ENCODE measurements at regions of chr6 and their contacts with region 1.

Region 1: DNA sequence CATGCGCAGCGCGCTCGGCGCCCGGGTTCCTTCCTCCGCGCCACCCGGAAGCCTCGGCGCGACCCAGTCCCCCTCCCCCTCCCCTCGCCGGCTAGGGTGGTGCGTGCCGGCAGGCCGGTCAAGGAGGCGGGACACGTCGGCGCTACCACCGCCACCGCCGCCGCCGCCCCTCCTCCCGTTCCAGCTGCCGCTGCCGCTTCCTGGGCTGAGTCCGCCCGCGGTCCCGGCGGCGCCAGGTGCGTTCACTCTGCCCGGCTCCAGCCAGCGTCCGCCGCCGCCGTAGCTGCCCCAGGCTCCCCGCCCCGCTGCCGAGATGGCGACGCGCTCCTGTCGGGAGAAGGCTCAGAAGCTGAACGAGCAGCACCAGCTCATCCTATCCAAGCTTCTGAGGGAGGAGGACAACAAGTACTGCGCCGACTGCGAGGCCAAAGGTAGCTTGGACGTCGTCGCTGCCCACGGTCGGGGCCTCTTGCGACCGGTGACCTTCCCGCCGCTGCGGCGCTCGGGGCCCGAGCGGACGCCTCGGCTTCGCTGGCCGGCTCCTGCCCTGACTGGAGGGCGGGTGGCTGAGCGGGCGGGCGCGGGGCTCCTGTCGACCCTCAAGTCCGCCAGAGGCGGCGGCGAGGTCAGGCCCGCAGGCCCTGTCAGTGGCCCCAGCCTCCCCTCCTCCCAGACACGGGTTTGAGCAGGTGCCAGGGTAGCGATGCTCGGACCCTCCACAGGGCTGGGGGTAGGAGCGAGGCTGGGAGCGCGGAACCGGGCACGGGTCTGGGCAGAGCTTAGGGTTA is at the start of gene SMAP1:
- DNase-seq: peak; percentile 97 to 99 (median 97)
- ATAC-seq: peak; percentile 95 to 99 (median 98)
- H3K4me3 ChIP-seq: peak within 1 kb of the TSS; percentile 68 to 98 (median 92)
- H3K27ac ChIP-seq: peak within 1 kb of the TSS; percentile 84 to 99 (median 95)
- H3K4me1 ChIP-seq: peaks cover 0 to 61% (median 36%) of the 10 kb centered on the region in 12 donors
- H3K27me3 ChIP-seq: no peaks in the 10 kb centered on the region
- CTCF ChIP-seq: peak in 1 of 12 donors; percentile 12
- POLR2A ChIP-seq: peak in 1 of 2 donors; percentile 76
- total RNA-seq, gene SMAP1: 28.1 to 35.1 (median 29.9) TPM

Region 2: DNA sequence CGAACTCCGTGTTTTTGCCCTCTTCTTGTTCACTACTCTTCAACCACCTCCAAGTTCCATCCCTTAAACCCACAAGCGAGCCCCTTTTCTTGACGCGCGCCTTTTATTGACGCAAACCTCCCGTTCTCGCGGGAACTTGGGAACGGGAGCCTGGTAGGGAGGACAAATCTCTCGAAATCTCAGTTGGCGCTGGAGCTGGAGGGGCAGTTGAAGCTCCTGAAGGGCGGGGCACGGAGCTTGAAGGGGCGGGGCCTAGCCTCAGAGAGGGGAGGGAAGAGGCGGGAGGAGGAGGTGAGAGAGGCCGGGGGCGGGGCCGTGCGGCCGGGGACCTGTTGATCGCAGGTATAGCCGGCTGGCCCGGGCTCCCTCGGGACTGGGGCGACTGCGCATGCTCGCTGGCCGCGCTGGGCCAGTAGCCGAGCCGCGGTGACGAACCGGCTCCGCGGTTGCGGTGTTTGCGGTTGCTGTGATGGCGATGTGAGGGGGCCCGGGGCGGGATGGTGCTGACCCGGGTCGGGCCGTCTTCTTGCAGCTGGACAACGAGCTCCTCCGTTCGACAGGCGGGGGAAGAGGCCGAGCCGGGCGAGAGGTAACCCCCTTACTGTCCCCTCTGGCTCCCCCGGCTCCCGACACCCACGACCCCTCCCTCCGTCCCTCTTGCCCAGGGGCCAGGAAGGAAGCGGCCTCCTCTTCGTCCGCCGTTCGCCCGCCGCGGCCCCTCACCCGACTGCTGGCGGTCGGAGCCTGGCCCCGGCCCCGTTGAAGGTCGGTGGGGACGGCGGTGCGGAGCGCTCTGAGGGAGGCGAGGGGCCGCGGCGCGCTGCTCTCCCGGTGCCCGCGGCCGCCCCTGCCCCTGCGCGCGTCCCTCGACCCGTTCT is 254.6 kb before region 1 on chr6 and contains the start of gene FAM135A:
- intact Hi-C with region 1: loop called in 4 of 10 experiments (anchors 5 to 10 kb)
- DNase-seq: peak; percentile 95 to 98 (median 97)
- ATAC-seq: peak; percentile 99
- H3K4me3 ChIP-seq: peak within 1 kb of the TSS; percentile 47 to 99 (median 94)
- H3K27ac ChIP-seq: peak within 1 kb of the TSS; percentile 62 to 92 (median 80)
- H3K4me1 ChIP-seq: peaks cover 0 to 21% (median 15%) of the 10 kb centered on the region in 12 donors
- H3K27me3 ChIP-seq: no peaks in the 10 kb centered on the region
- CTCF ChIP-seq: no peak
- POLR2A ChIP-seq: peak in 1 of 2 donors; percentile 62
- total RNA-seq, gene FAM135A: 9.7 to 14.9 (median 13.2) TPM

Region 3: GRCh38 chr6:70507161-70507560 is 160.7 kb before region 1 on chr6:
- intact Hi-C with region 1: no loop called
- DNase-seq: no peak
- ATAC-seq: no peak
- H3K4me3 ChIP-seq: no peak overlapping the region
- H3K27ac ChIP-seq: no peak overlapping the region
- H3K4me1 ChIP-seq: no peaks in the 10 kb centered on the region
- H3K27me3 ChIP-seq: no peaks in the 10 kb centered on the region
- CTCF ChIP-seq: no peak
- POLR2A ChIP-seq: no peak

Region 4: DNA sequence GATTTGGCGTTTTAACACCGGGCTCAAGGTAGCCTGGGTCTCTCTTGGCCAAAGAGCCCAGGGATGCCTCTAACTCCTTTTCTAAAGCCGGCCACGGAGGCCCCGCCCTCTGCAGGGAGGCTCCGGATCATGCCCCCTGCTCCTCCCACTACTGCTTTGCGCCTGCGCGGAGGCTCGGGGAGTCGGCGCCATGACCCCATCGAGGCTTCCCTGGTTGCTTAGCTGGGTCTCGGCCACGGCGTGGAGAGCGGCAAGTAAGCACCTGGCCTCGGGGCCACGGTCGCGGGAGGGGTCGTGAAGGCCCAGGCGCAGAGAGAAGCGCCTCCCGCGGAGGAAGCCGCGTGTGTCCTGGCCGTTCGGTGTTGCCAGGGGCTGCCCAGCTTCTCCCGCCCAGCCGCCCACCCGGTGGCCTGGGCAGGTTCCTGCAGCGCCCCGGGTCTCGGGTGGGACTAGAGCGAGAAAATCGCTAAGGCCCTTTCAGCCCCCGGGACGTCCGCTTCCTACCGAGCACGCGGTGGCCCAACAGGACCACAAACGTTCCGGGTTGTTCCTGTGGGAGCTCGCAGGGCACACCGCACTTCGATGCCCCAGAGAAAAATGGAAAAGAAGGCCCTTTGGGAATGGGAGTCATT is 101.0 kb before region 1 on chr6 and contains the start of gene SDHAF4:
- intact Hi-C with region 1: loop called in 7 of 10 experiments (anchors 2 to 10 kb)
- DNase-seq: peak; percentile 92 to 97 (median 96)
- ATAC-seq: peak; percentile 100
- H3K4me3 ChIP-seq: peak within 1 kb of the TSS; percentile 74 to 98 (median 79)
- H3K27ac ChIP-seq: peak within 1 kb of the TSS; percentile 53 to 96 (median 86)
- H3K4me1 ChIP-seq: peaks cover 0 to 15% (median 5%) of the 10 kb centered on the region in 12 donors
- H3K27me3 ChIP-seq: no peaks in the 10 kb centered on the region
- CTCF ChIP-seq: peak in 2 of 12 donors; percentile 24 to 26
- POLR2A ChIP-seq: peak in 1 of 2 donors; percentile 84
- total RNA-seq, gene SDHAF4: 8.8 to 21.3 (median 14.3) TPM

Region 5: DNA sequence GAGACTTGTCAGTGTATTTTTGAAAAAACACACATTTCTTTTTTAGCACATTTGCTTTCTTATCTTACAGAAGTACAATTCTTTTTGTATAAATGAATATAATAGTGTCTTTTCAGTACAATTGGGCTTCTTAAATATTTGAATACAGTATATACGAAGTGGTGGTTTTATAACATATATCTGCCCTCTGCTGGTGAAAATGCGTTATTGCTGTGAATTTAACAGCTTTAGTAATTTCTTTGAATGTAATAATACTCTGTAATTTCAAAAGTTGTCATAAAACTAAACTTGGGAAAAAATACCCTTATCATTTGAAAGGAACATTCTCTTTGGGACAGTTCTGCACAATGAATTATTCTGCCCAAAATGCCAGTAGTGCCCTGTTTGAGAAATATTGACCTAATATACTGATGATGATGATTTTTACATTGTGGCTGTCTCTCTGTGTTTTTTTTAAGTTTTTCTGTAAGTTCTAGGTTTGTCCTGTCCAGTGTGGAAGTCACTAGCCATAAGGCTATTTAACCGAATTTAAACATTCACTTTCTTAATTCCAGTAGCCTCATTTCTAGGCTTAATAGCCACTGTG is 18.7 kb after region 1 on chr6:
- intact Hi-C with region 1: loop called in 1 of 10 experiments (anchors 2 kb)
- DNase-seq: no peak
- ATAC-seq: peak in 1 of 4 donors; percentile 67
- H3K4me3 ChIP-seq: no peak overlapping the region
- H3K27ac ChIP-seq: no peak overlapping the region
- H3K4me1 ChIP-seq: peaks cover 0 to 36% (median 22%) of the 10 kb centered on the region in 12 donors
- H3K27me3 ChIP-seq: no peaks in the 10 kb centered on the region
- CTCF ChIP-seq: peak; percentile 66 to 87 (median 83)
- POLR2A ChIP-seq: no peak

Region 6: GRCh38 chr6:70905742-70906141 is 237.8 kb after region 1 on chr6:
- intact Hi-C with region 1: no loop called
- DNase-seq: no peak
- ATAC-seq: no peak
- H3K4me3 ChIP-seq: no peak overlapping the region
- H3K27ac ChIP-seq: no peak overlapping the region
- H3K4me1 ChIP-seq: no peaks in the 10 kb centered on the region
- H3K27me3 ChIP-seq: no peaks in the 10 kb centered on the region
- CTCF ChIP-seq: no peak
- POLR2A ChIP-seq: no peak

Measured in heart left ventricle (tissue), 16 donors.